ENCODE measurements at regions of chr19 and their contacts with region 1.

Region 1: DNA sequence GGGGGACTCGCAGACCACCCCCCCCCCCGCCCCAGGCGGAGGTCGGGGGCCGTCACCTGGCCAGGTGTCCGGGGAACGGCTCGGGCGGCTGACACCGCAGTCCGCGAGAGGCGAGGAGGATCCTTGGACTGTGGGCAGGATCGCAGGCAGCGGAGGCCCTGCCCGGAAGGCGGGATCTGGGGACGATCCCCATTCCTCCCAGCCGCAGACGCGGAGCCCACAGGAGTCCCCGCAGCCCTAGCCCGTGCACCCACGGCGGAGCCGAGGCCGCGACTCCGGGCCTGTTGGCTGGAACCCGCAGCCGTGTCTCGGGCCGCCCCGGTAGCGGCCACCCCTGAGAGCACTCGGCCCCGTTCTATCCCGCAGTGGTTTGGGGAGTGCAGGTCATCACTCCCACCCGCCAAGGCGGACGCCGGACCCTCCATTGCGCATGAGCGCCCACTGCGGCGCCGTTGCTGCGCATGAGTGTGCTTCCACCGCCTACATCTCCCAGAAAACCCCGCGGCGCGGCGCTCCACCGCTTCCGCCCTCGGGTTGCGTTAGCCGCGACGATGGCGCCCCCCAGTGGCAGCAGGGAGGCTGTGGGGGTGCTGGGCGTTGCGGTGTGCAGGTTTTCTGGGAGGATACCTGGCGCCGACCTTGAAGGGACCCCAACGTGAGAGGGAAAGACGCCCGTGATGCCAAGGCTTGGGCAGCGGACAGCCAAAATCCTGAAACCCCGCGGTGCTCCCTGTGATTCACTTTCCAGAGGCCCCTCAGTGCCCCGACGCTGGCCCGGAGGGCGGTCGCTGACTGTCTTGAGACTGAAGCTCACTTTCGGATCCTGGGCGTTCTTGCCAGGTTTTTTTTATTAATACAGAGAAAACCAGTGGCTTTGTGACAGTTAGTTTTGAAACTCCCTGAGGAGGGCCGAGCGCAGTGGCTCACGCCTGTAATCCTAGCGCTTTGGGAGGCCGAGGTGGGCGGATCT is 4.4 kb upstream of the ZNF329 start:
- DNase-seq: peak; percentile 98
- H3K4me3 Mint-ChIP-seq: peak overlapping the region; percentile 79
- H3K27ac Mint-ChIP-seq: peak overlapping the region; percentile 23
- H3K4me1 Mint-ChIP-seq: peaks cover 11% of the 10 kb centered on the region
- H3K27me3 Mint-ChIP-seq: no peaks in the 10 kb centered on the region

Region 2: DNA sequence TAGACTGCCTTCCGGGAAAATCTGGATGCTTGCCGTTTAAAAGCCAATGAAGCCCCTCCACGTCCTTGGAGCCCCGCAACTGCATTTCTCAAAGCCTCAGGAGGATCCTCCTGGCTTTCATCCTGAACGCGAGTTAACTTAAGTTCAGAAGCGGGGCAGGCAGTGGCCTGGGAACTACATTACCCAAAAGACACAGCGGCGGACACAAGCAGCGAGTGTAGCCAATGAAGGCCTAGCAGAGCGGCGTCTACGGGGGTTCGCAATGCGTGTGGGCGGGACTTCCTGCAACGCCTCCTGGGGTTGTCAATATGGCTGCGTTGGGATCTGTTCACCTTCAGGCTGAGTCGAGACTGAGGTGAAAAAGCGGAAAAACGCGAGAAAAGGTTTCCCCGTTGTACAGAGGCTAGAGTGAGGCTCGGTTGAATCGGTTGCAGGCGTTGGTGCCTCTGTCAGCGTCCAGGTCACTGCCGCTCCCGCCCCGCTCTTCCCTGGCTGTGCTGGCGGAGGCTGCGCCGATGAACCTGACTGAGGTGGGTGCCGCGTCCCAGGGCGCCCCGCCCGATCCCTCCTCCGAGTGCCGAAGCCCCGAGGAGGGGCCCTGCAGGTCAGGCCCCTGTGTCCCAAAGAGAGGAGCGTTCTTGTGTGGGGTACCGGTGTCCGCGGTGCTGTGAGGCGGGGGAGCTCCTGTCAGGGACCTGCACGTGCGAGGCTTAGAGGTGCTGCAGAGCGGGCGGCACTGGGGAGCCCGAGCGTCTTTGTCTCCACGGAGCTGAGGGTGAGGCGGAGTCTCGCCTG is 743.9 kb before region 1 on chr19 and contains the start of gene ZNF17:
- CTCF ChIA-PET with region 1: no interaction called
- POLR2A ChIA-PET with region 1: no interaction called
- intact Hi-C with region 1: loop called (anchors 1 kb)
- DNase-seq: peak; percentile 95
- H3K4me3 Mint-ChIP-seq: peak within 1 kb of the TSS; percentile 92
- H3K27ac Mint-ChIP-seq: peak within 1 kb of the TSS; percentile 66
- H3K4me1 Mint-ChIP-seq: peaks cover 14% of the 10 kb centered on the region
- H3K27me3 Mint-ChIP-seq: no peaks in the 10 kb centered on the region
- total RNA-seq, gene ZNF17: 4.2 to 5.0 TPM

Region 3: DNA sequence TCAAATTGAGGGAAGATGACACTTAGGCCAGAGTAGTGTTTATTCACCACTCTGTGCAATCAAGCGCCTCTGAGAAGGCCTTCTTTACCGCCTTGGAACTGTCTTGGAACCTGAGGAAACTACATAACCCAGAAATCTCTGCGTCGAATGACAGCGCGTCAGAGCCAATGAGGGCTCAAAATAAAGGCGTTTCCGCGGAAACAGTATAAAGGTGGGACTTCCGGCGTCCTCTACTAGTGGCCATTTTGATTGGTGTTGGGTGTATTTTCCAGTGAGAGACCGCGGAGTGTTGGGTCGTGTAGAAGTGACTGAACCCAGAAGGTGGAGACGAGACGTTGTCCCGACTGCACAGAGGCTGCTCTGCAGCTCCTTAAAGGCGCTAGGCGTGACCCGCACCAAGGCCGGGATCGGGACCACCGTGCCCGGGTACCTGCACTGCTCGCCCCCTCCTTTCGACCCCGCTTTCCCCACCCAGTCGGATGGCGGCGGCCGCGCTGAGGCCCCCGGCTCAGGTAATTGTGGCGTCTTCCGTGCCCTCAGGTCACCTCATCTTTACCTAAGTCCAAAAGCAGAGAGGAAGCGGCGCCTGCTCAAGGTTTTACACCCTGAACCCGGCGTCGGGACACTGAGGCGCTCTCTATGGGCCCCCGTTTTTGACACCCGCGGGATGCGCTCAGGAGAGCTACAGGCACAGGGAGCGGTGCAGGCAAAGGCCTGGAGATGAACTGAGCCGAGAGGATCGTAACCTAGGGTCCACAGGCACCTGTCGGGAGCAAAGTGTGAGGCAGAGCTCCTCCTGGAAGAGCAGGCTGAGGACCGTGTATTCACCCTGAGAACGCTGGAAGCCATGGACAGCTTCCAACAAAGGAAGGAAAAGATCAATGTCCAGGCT is 408.1 kb before region 1 on chr19 and contains the start of gene ZNF776:
- CTCF ChIA-PET with region 1: interaction called, 3 read pairs
- POLR2A ChIA-PET with region 1: no interaction called
- intact Hi-C with region 1: loop called (anchors 2 kb)
- DNase-seq: peak; percentile 89
- H3K4me3 Mint-ChIP-seq: peak within 1 kb of the TSS; percentile 94
- H3K27ac Mint-ChIP-seq: peak within 1 kb of the TSS; percentile 86
- H3K4me1 Mint-ChIP-seq: peaks cover 13% of the 10 kb centered on the region
- H3K27me3 Mint-ChIP-seq: no peaks in the 10 kb centered on the region
- total RNA-seq, gene ZNF776: 7.8 to 8.3 TPM

Region 4: GRCh38 chr19:57914531-57914930 is 240.4 kb before region 1 on chr19:
- CTCF ChIA-PET with region 1: no interaction called
- POLR2A ChIA-PET with region 1: no interaction called
- intact Hi-C with region 1: loop called (anchors 1 kb)
- DNase-seq: no peak
- H3K4me3 Mint-ChIP-seq: no peak overlapping the region
- H3K27ac Mint-ChIP-seq: no peak overlapping the region
- H3K4me1 Mint-ChIP-seq: peaks cover 28% of the 10 kb centered on the region
- H3K27me3 Mint-ChIP-seq: no peaks in the 10 kb centered on the region

Region 5: GRCh38 chr19:58002384-58003173 is 152.4 kb before region 1 on chr19 and contains the start of gene ZNF606:
- CTCF ChIA-PET with region 1: no interaction called
- POLR2A ChIA-PET with region 1: no interaction called
- intact Hi-C with region 1: loop called (anchors 5 kb)
- DNase-seq: peak; percentile 88
- H3K4me3 Mint-ChIP-seq: peak within 1 kb of the TSS; percentile 78
- H3K27ac Mint-ChIP-seq: peak within 1 kb of the TSS; percentile 56
- H3K4me1 Mint-ChIP-seq: peaks cover 26% of the 10 kb centered on the region
- H3K27me3 Mint-ChIP-seq: no peaks in the 10 kb centered on the region
- total RNA-seq, gene ZNF606: 5.1 to 5.8 TPM

Region 6: DNA sequence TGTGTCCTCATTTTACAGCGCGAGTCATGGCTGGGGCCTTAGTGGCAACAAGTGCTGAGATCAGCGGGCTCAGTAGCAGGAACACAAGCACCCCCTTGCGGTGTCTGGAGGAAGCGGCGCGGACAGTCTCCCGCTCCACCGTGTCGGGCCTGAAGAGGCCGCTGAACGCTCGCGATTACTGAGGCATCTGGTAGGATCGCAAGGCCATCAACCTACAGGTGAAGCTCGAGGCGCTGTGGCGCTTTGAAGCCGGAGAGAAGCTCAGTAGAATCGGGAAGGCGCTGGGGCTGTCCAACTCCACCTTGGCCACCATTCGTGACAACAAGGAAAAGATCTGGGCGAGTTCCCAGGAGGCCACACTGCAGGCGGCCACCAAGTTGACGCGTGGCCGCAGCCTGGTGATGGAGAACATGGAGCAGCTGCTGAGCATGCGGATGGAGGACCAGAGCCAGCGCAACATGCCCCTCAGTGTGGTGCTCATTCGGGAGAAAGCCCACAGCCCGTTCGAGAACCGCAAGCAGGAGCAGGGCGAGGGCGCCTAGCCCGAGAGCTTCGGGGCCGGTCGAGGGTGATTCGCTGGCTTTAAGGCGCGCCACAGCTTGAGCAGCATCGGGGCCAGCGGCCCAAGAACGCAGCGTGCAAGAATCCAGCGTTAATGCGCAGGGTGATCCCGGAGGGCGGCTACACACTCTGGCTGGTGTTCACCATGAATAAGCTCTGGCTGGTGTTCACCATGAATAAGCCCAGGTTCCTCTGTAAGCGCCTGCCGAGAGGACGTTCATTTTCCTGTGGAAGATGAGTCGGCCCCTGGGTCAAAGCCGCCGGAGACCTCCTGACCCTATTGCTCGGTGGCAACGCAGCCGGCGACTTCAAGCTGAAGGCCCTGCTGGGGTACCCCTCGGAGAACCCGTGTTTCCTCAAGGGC is 426.5 kb after region 1 on chr19:
- CTCF ChIA-PET with region 1: no interaction called
- POLR2A ChIA-PET with region 1: no interaction called
- intact Hi-C with region 1: no loop called
- DNase-seq: peak; percentile 96
- H3K4me3 Mint-ChIP-seq: no peak overlapping the region
- H3K27ac Mint-ChIP-seq: peak overlapping the region; percentile 78
- H3K4me1 Mint-ChIP-seq: peaks cover 36% of the 10 kb centered on the region
- H3K27me3 Mint-ChIP-seq: no peaks in the 10 kb centered on the region

Measured in activated CD4-positive, alpha-beta memory T cell treated with anti-CD3 and anti-CD28 coated beads for 36 hours (primary cell).